ENCODE measurements at regions of chr19 and their contacts with region 1.

Region 1: DNA sequence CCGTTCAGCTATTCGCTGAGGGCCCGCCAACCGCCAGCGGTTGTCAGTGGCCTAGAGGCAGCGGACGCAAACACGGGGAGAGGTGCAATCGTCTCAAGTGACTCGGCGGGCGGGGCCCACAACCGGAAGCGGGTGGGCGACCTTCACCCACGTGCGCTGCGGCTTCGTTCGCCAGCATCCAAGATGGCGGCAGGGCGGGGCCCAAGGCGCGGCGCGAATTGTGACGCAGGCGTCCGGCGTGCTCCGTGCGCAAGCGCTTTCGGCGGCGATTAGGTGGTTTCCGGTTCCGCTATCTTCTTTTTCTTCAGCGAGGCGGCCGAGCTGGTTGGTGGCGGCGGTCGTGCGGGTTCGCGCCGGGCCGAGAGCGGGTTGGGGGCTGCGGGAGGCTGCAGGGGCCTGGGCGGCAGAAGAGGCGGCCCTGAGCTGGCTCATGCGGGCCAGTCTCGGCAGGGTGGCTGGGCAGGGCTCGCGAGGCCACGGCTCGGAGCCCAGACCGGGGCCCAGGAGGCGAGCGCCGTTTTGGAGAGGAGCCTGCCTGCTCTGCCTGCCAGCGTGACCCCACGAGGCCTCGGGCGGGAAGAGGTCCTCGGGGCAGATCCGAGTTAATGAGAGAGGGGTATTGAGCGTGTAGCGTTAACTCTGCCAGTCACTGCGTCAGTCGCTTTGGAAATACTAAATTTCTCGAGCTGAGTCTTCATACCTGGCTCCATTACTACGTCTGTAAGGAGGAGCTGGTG is at the start of gene UBA52:
- H3K4me3 ChIP-seq: peak within 1 kb of the TSS; percentile 99
- H3K27ac ChIP-seq: peak within 1 kb of the TSS; percentile 87
- H3K4me1 ChIP-seq: peaks cover 3% of the 10 kb centered on the region; the same call in 1 of the 2 replicates
- CTCF ChIP-seq: no peak

Region 2: GRCh38 chr19:18557474-18558201 is 14.1 kb before region 1 on chr19 and contains the start of gene KXD1:
- CTCF ChIA-PET with region 1: no interaction called
- POLR2A ChIA-PET with region 1: interaction called, 62 read pairs
- H3K4me3 ChIP-seq: peak within 1 kb of the TSS; percentile 81
- H3K27ac ChIP-seq: peak within 1 kb of the TSS; percentile 51; the same call in 1 of the 2 replicates
- H3K4me1 ChIP-seq: no peaks in the 10 kb centered on the region
- CTCF ChIP-seq: no peak

Region 3: DNA sequence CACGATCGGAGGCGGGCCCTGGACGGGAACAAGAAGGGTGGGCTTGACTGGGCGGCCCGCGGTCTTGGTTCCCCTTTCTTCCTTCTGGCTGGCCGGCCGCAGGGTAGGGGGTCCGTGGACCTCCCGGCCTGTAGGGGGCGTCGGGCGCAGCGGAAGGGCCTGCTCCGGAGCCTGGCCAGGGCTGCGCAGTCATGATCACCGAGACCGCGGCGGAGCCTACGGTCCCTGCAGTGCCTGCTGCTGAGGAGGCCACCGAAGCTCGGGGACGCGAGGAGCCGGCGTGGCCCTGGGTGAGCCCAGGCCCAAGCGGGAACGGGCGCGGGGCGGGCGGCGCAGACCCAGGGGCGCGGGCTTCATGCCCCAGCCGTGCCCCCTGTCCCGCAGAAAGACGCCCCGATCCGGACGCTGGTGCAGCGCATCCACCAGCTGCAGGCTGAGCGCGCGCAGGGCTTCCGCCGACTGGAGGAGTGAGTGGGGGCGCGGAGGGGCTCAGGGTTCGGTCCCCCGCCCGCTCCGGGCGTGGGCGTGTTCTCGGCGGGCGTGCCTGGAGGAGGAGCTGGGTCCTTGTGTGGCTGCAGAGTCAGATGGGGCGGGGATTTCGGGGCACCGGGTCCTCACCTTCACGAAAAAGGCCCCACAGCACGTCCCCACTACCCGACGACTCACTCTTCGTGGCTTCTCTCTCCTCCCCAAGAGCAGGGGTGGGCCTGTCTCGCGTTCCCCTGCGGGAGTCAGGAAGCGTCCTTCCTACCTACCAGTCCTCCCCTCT is 17.1 kb after region 1 on chr19 and contains the start of gene REX1BD:
- CTCF ChIA-PET with region 1: interaction called, 5 read pairs
- POLR2A ChIA-PET with region 1: interaction called, 60 read pairs
- H3K4me3 ChIP-seq: peak within 1 kb of the TSS; percentile 75
- H3K27ac ChIP-seq: peak within 1 kb of the TSS; percentile 77
- H3K4me1 ChIP-seq: no peaks in the 10 kb centered on the region
- CTCF ChIP-seq: peak; percentile 98

Region 4: GRCh38 chr19:18594096-18594823 is 22.5 kb after region 1 on chr19:
- CTCF ChIA-PET with region 1: interaction called, 5 read pairs
- POLR2A ChIA-PET with region 1: interaction called, 60 read pairs
- H3K4me3 ChIP-seq: peak overlapping the region; percentile 41
- H3K27ac ChIP-seq: no peak overlapping the region
- H3K4me1 ChIP-seq: no peaks in the 10 kb centered on the region
- CTCF ChIP-seq: peak; percentile 63